PC-3 (cell line): ENCODE measurements at regions of chr18 and their contacts with region 1.

Region 1: GRCh38 chr18:62844850-62845643 is 129.7 kb downstream of the PHLPP1 start:
- DNase-seq: no peak
- ATAC-seq: no peak
- H3K4me3 ChIP-seq: no peak overlapping the region
- H3K27ac ChIP-seq: no peak overlapping the region
- H3K4me1 ChIP-seq: peaks cover 20% of the 10 kb centered on the region
- H3K27me3 ChIP-seq: no peaks in the 10 kb centered on the region
- CTCF ChIP-seq: no peak

Region 2: GRCh38 chr18:62808123-62808522 is 36.9 kb before region 1 on chr18:
- CTCF ChIA-PET with region 1: no interaction called
- POLR2A ChIA-PET with region 1: no interaction called
- intact Hi-C with region 1: loop called (anchors 5 kb)
- DNase-seq: no peak
- ATAC-seq: no peak
- H3K4me3 ChIP-seq: no peak overlapping the region
- H3K27ac ChIP-seq: no peak overlapping the region
- H3K4me1 ChIP-seq: peaks cover 31% of the 10 kb centered on the region
- H3K27me3 ChIP-seq: no peaks in the 10 kb centered on the region
- CTCF ChIP-seq: no peak